ENCODE measurements at regions of chr3 and their contacts with region 1.

Region 1: DNA sequence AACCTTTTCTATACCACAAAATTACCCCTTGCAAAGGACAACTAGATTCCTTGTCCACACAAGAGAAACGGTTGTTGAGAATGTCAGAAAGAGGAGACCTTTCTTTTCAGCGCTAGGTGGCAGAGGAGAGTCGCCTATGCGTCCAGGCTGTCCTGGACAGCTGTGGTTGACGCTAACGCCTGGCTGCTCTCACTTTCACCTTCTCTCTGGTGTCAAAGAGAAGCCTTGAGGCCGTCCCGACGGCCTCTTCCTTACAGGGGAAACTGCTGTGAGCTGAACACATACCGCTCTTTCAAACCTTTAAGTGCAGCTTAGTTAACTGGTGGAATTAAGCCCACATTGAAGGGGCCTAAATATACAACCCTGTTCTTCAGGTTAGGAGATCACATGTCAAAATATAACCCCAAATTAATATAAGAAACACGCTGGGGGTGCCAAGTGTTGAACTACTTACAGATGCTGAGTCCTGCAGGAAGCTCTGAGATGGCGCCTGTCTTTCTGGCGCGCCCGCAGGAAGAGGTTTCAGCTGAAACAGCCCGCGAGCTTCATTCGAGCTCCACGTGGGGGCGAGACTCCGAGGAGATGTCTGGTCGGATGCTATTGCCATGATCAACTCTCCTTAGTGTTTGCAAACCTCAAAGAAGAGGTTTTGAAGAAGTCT is 26.1 kb upstream of the KBTBD8 start:
- DNase-seq: peak; percentile 34 to 70 (median 46)
- H3K4me3 ChIP-seq: peak overlapping the region; percentile 57
- H3K4me3 Mint-ChIP-seq: peak overlapping the region; percentile 75 to 94 (median 87)
- H3K27ac ChIP-seq: peak overlapping the region; percentile 8
- H3K27ac Mint-ChIP-seq: peak overlapping the region; percentile 21 to 97 (median 76)
- H3K4me1 ChIP-seq: peaks cover 4% of the 10 kb centered on the region
- H3K4me1 Mint-ChIP-seq: peaks cover 9 to 17% (median 12%) of the 10 kb centered on the region in 3 donors
- H3K27me3 ChIP-seq: no peaks in the 10 kb centered on the region
- H3K27me3 Mint-ChIP-seq: no peaks in the 10 kb centered on the region

Region 2: GRCh38 chr3:66675366-66675765 is 296.7 kb before region 1 on chr3:
- CTCF ChIA-PET with region 1: no interaction called
- POLR2A ChIA-PET with region 1: no interaction called
- DNase-seq: no peak
- H3K4me3 ChIP-seq: no peak overlapping the region
- H3K4me3 Mint-ChIP-seq: no peak overlapping the region
- H3K27ac ChIP-seq: no peak overlapping the region
- H3K27ac Mint-ChIP-seq: no peak overlapping the region
- H3K4me1 ChIP-seq: no peaks in the 10 kb centered on the region
- H3K4me1 Mint-ChIP-seq: peaks cover 3 to 5% (median 4%) of the 10 kb centered on the region in 3 donors
- H3K27me3 ChIP-seq: no peaks in the 10 kb centered on the region
- H3K27me3 Mint-ChIP-seq: peaks cover 5 to 14% of the 10 kb centered on the region in 2 donors

Region 3: DNA sequence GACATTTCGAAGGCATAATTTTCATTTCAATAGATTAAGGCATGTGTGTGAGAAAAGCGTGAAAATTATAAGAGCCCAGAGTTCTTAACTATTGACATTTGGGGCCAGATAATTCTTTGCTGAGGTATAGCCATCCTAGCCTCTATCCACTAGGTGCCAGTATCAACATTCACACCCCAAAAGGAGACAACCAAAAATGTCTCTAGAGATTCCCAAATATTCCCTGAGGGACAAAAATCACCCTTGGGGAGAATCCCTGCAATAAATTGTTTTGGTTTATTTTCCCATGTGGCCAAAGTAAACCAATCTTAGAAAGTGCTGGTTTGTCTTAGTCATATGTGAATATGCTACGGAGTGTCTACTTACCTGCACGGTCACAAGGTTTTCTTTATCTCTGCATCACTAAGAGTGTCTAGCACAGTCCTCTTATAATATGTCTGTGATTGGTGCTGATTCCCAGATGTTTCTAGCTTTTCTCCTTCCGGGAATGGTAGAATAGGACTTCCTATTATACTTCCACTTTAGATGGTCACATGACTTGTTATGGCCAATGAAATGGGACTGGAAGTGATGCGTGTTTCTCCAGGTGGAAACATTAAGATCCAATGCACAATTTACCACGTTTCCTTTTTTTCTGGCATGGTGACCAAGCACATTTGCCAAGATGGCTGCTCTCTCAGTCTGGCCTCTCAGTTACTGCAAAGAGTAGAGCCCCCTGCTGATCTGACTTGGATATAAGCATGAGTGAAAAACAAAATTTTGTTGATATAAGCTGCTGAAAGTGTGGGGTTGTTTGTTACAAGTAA is 18.0 kb after region 1 on chr3:
- CTCF ChIA-PET with region 1: interaction called, 32 read pairs
- POLR2A ChIA-PET with region 1: no interaction called
- DNase-seq: no peak
- H3K4me3 ChIP-seq: no peak overlapping the region
- H3K4me3 Mint-ChIP-seq: no peak overlapping the region
- H3K27ac ChIP-seq: no peak overlapping the region
- H3K27ac Mint-ChIP-seq: no peak overlapping the region
- H3K4me1 ChIP-seq: no peaks in the 10 kb centered on the region
- H3K4me1 Mint-ChIP-seq: no peaks in the 10 kb centered on the region
- H3K27me3 ChIP-seq: no peaks in the 10 kb centered on the region
- H3K27me3 Mint-ChIP-seq: peaks cover 18 to 28% of the 10 kb centered on the region in 2 donors

Region 4: DNA sequence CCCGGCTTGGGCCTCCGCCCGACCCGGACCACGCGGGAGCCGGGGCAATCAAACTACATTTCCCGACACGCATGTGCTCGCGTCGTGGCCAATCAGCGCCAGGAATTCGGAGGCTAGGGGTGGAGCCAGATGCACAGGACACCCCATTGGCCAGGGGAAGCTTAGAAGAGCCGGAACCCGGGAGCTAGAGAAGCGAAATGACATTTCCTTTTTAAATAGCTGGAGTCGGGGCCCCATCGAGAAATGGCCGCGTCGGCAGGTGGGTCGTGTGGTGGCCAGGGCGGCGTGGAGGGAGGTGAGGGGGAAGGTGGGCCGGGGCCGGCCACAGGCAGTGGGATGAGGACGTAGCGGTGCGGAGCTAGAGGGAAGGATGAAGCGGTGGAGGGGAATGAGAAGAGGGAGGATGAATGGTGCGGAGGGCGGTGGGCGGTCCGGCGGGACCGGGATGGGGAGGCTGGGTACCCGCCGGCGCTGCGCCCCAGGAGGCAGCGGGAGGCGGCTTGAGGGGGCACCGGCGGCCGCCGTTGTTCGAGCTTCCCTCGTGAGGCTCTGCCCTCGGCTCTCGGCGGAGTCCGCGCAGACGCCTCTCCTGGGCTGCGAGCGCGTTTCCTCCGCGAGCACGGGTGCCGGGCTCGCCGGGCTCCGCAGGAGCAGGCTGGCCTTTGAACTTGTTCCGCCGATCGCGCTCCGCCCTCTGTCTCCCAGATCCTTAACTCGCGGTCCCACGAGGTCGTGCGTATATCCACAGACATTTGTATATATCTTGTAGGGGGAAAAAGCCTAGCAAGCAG is 26.3 kb after region 1 on chr3 and contains the start of gene KBTBD8:
- CTCF ChIA-PET with region 1: interaction called, 21 read pairs
- POLR2A ChIA-PET with region 1: interaction called, 10 read pairs
- DNase-seq: peak; percentile 92 to 99 (median 98)
- H3K4me3 ChIP-seq: peak within 1 kb of the TSS; percentile 71
- H3K4me3 Mint-ChIP-seq: peak within 1 kb of the TSS; percentile 89 to 99 (median 92)
- H3K27ac ChIP-seq: peak within 1 kb of the TSS; percentile 55
- H3K27ac Mint-ChIP-seq: peak within 1 kb of the TSS; percentile 70 to 98 (median 92)
- H3K4me1 ChIP-seq: peaks cover 12% of the 10 kb centered on the region
- H3K4me1 Mint-ChIP-seq: peaks cover 26 to 42% (median 28%) of the 10 kb centered on the region in 3 donors
- H3K27me3 ChIP-seq: no peaks in the 10 kb centered on the region
- H3K27me3 Mint-ChIP-seq: peaks cover 11 to 31% of the 10 kb centered on the region in 2 donors
- total RNA-seq, gene KBTBD8: 21.9 to 23.3 TPM

Region 5: GRCh38 chr3:67006460-67006859 is 34.4 kb after region 1 on chr3:
- CTCF ChIA-PET with region 1: interaction called, 14 read pairs
- POLR2A ChIA-PET with region 1: no interaction called
- DNase-seq: no peak
- H3K4me3 ChIP-seq: no peak overlapping the region
- H3K4me3 Mint-ChIP-seq: no peak overlapping the region
- H3K27ac ChIP-seq: no peak overlapping the region
- H3K27ac Mint-ChIP-seq: no peak overlapping the region
- H3K4me1 ChIP-seq: peaks cover 8% of the 10 kb centered on the region
- H3K4me1 Mint-ChIP-seq: peaks cover 23 to 46% (median 41%) of the 10 kb centered on the region in 3 donors
- H3K27me3 ChIP-seq: no peaks in the 10 kb centered on the region
- H3K27me3 Mint-ChIP-seq: no peaks in the 10 kb centered on the region

Region 6: DNA sequence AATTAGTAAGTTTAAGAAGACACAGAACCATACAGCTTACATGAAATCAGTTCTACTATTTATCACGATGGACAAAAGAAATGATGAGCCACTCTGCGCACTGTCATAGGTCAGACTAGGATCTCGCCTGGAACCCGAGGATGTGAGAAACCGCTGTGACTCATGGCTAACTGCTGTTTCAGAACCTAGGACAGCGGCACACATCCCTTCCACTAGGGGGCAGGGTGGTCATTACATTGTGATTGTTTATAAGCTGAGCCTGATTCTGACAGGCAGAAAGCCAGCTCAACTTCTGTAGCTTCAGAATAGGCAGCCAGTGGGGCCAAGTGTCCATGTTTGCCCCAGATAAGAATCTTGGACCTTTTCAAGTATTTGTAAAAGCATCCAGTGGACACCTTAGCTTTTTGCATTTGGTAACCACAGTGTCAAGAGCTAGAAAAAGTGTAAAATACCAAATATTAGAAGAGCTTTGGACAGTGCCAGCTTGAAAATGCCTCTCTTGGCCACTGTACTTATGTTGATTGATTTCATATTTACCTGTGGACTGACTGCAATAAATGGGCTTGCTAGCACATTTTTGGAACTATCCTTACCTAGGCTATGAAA is 141.9 kb after region 1 on chr3:
- CTCF ChIA-PET with region 1: interaction called, 29 read pairs
- POLR2A ChIA-PET with region 1: no interaction called
- DNase-seq: peak; percentile 44 to 77 (median 52)
- H3K4me3 ChIP-seq: no peak overlapping the region
- H3K4me3 Mint-ChIP-seq: no peak overlapping the region
- H3K27ac ChIP-seq: no peak overlapping the region
- H3K27ac Mint-ChIP-seq: no peak overlapping the region
- H3K4me1 ChIP-seq: no peaks in the 10 kb centered on the region
- H3K4me1 Mint-ChIP-seq: peaks cover 0 to 1% (median 0%) of the 10 kb centered on the region in 3 donors
- H3K27me3 ChIP-seq: no peaks in the 10 kb centered on the region
- H3K27me3 Mint-ChIP-seq: peaks cover 12 to 37% of the 10 kb centered on the region in 2 donors

Region 7: GRCh38 chr3:68210671-68211070 is 1238.7 kb after region 1 on chr3:
- CTCF ChIA-PET with region 1: no interaction called
- POLR2A ChIA-PET with region 1: no interaction called
- DNase-seq: no peak
- H3K4me3 ChIP-seq: no peak overlapping the region
- H3K4me3 Mint-ChIP-seq: no peak overlapping the region
- H3K27ac ChIP-seq: no peak overlapping the region
- H3K27ac Mint-ChIP-seq: no peak overlapping the region
- H3K4me1 ChIP-seq: no peaks in the 10 kb centered on the region
- H3K4me1 Mint-ChIP-seq: no peaks in the 10 kb centered on the region
- H3K27me3 ChIP-seq: no peaks in the 10 kb centered on the region
- H3K27me3 Mint-ChIP-seq: peaks cover 0 to 5% of the 10 kb centered on the region in 2 donors

Region 8: GRCh38 chr3:68876112-68876713 is 1904.2 kb after region 1 on chr3:
- CTCF ChIA-PET with region 1: interaction called, 26 read pairs
- POLR2A ChIA-PET with region 1: no interaction called
- DNase-seq: peak in 3 of 5 donors; percentile 28 to 49 (median 42)
- H3K4me3 ChIP-seq: no peak overlapping the region
- H3K4me3 Mint-ChIP-seq: no peak overlapping the region
- H3K27ac ChIP-seq: no peak overlapping the region
- H3K27ac Mint-ChIP-seq: no peak overlapping the region
- H3K4me1 ChIP-seq: no peaks in the 10 kb centered on the region
- H3K4me1 Mint-ChIP-seq: no peaks in the 10 kb centered on the region
- H3K27me3 ChIP-seq: no peaks in the 10 kb centered on the region
- H3K27me3 Mint-ChIP-seq: peaks cover 7 to 35% of the 10 kb centered on the region in 2 donors